Thyroid gland (tissue), 4 donors: ENCODE measurements at regions of chr2 and their contacts with region 1.

Region 1: GRCh38 chr2:235135990-235136561 is 184.3 kb downstream of the SH3BP4 start:
- DNase-seq: peak; percentile 80 to 84
- H3K4me3 ChIP-seq: no peak overlapping the region
- H3K27ac ChIP-seq: no peak overlapping the region
- H3K4me1 ChIP-seq: no peaks in the 10 kb centered on the region
- H3K27me3 ChIP-seq: no peaks in the 10 kb centered on the region
- CTCF ChIP-seq: peak; percentile 52 to 80 (median 70)
- POLR2A ChIP-seq: no peak

Region 2: DNA sequence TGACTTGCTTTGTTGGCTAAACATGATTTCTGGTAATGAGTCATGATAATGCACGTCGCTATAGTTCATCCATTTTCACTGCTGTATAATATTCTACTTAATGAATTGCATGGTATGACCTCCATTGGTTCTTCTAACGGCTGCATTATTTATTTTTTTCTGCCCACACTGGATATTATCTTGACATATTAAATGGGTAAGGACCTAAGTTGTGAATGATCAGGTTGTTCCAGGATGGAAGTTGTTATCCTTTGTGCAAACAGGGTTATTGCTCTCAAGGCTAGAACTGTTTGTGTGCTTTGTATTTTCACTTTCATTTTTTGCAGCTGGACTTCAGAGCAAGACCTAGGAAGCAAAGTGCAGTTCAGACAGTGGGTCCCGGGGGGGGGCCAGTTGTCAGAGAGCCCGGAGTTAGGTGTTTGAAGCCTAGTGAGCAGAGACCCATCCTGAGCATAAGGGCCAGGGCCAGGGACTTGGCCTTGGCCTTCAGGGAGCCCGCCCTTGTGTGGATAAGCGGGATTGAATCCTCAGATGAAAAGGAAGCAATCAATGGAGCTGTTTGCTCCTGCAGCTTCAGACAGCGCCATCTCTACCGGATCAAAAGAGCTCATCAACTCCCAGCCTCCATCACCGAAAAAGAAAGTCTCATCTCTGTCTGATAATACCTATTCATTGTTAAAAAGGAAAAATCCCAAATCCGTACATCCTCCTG is 405.9 kb after region 1 on chr2:
- intact Hi-C with region 1: no loop called
- DNase-seq: no peak
- H3K4me3 ChIP-seq: no peak overlapping the region
- H3K27ac ChIP-seq: no peak overlapping the region
- H3K4me1 ChIP-seq: no peaks in the 10 kb centered on the region
- H3K27me3 ChIP-seq: no peaks in the 10 kb centered on the region
- CTCF ChIP-seq: no peak
- POLR2A ChIP-seq: no peak

Region 3: GRCh38 chr2:235594041-235594440 is 458.0 kb after region 1 on chr2:
- intact Hi-C with region 1: loop called (anchors 5 kb)
- DNase-seq: no peak
- H3K4me3 ChIP-seq: no peak overlapping the region
- H3K27ac ChIP-seq: no peak overlapping the region
- H3K4me1 ChIP-seq: no peaks in the 10 kb centered on the region
- H3K27me3 ChIP-seq: no peaks in the 10 kb centered on the region
- CTCF ChIP-seq: peak in 5 of 6 experiments; percentile 43 to 86 (median 71)
- POLR2A ChIP-seq: no peak

Region 4: DNA sequence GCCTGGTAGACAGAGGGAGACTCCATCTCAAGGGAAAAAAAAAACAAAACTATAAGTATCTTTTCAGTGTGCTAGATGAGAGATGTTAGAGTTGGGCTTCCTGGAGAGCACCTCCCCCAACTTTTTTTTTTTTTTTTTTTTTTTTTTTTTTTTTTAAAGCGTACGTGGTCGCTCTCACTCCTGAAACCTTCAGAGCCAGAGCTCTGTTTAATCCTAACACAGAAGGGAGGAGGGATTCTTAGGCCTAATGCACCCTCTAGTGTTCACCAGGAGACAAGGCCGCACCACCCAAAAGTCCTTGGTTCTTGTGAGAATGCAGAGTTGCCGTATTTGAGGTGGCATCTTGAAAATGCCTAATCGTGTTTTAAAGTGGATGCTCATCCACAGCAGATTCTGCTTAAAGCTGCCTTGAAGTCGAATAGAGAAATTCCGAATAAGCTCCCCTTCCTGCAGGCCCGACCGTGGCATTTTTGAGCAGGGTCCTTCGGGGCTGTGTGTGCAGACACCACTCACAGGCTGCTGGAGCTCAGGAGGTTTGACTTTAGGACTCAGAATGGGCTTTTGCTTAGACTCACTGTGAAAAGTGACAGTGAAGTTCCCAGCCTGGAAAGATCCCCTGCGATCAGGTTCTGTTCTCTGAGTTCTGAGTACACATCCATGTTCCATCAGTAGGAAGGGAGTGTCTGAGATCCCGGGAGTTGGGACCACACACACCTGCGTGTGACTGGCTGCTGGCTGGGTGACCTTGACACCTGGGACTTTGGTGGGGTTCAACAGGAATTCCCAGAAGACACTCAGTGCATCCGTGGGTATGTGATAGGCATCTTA is 610.4 kb after region 1 on chr2:
- intact Hi-C with region 1: loop called (anchors 10 kb)
- DNase-seq: peak; percentile 57 to 66
- H3K4me3 ChIP-seq: no peak overlapping the region
- H3K27ac ChIP-seq: no peak overlapping the region
- H3K4me1 ChIP-seq: no peaks in the 10 kb centered on the region
- H3K27me3 ChIP-seq: no peaks in the 10 kb centered on the region
- CTCF ChIP-seq: peak; percentile 44 to 85 (median 78)
- POLR2A ChIP-seq: no peak